Activated CD8-positive, alpha-beta T cell treated with anti-CD3 and anti-CD28 coated beads, Interleukin-2, amount 10 ng/mL, durations not matched to agents 7 days and 5 days (primary cell): ENCODE measurements at regions of chr2 and their contacts with region 1.

Region 1: GRCh38 chr2:43169987-43170386 is 56.4 kb downstream of the ZFP36L2 start:
- DNase-seq: peak; percentile 74
- ATAC-seq: peak; percentile 24
- H3K4me3 Mint-ChIP-seq: peak overlapping the region; percentile 61
- H3K27ac Mint-ChIP-seq: peak overlapping the region; percentile 89
- H3K4me1 Mint-ChIP-seq: peaks cover 83% of the 10 kb centered on the region
- H3K27me3 Mint-ChIP-seq: no peaks in the 10 kb centered on the region

Region 2: GRCh38 chr2:43100883-43101662 is 68.9 kb before region 1 on chr2:
- CTCF ChIA-PET with region 1: no interaction called
- POLR2A ChIA-PET with region 1: no interaction called
- DNase-seq: no peak
- ATAC-seq: no peak
- H3K4me3 Mint-ChIP-seq: no peak overlapping the region
- H3K27ac Mint-ChIP-seq: no peak overlapping the region
- H3K4me1 Mint-ChIP-seq: peaks cover 3% of the 10 kb centered on the region
- H3K27me3 Mint-ChIP-seq: no peaks in the 10 kb centered on the region

Region 3: GRCh38 chr2:43131024-43131889 is 38.7 kb before region 1 on chr2:
- CTCF ChIA-PET with region 1: interaction called, 242 read pairs
- POLR2A ChIA-PET with region 1: interaction called, 13 read pairs
- DNase-seq: peak; percentile 94
- ATAC-seq: peak; percentile 40
- H3K4me3 Mint-ChIP-seq: peak overlapping the region; percentile 59
- H3K27ac Mint-ChIP-seq: peak overlapping the region; percentile 100
- H3K4me1 Mint-ChIP-seq: peaks cover 91% of the 10 kb centered on the region
- H3K27me3 Mint-ChIP-seq: no peaks in the 10 kb centered on the region

Region 4: DNA sequence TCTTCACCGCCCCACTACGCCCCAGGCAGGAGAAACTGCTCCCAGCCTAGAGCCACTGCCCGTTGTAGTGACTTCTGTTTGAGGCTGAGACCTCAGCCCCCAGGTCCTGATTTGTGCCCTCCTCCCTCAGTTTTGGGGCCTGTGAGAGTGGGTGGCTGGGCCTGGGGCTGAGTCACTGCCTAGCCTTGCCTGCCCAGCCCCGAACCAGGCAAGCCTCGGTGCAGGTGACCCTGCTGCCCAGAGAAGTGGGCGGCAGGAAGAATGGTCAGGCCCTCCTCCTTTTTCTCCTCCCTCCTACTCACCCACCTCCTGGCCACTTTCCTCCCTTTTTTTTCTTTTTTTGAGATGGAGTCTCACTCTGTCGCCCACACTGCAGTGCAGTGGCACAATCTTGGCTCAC is 10.2 kb before region 1 on chr2:
- CTCF ChIA-PET with region 1: interaction called, 28 read pairs
- POLR2A ChIA-PET with region 1: interaction called, 10 read pairs
- DNase-seq: no peak
- ATAC-seq: no peak
- H3K4me3 Mint-ChIP-seq: peak overlapping the region; percentile 27
- H3K27ac Mint-ChIP-seq: peak overlapping the region; percentile 95
- H3K4me1 Mint-ChIP-seq: peaks cover 70% of the 10 kb centered on the region
- H3K27me3 Mint-ChIP-seq: no peaks in the 10 kb centered on the region

Region 5: GRCh38 chr2:43201497-43201896 is 31.5 kb after region 1 on chr2:
- CTCF ChIA-PET with region 1: interaction called, 17 read pairs
- POLR2A ChIA-PET with region 1: interaction called, 6 read pairs
- DNase-seq: no peak
- ATAC-seq: no peak
- H3K4me3 Mint-ChIP-seq: no peak overlapping the region
- H3K27ac Mint-ChIP-seq: peak overlapping the region; percentile 77
- H3K4me1 Mint-ChIP-seq: peaks cover 38% of the 10 kb centered on the region
- H3K27me3 Mint-ChIP-seq: no peaks in the 10 kb centered on the region

Region 6: DNA sequence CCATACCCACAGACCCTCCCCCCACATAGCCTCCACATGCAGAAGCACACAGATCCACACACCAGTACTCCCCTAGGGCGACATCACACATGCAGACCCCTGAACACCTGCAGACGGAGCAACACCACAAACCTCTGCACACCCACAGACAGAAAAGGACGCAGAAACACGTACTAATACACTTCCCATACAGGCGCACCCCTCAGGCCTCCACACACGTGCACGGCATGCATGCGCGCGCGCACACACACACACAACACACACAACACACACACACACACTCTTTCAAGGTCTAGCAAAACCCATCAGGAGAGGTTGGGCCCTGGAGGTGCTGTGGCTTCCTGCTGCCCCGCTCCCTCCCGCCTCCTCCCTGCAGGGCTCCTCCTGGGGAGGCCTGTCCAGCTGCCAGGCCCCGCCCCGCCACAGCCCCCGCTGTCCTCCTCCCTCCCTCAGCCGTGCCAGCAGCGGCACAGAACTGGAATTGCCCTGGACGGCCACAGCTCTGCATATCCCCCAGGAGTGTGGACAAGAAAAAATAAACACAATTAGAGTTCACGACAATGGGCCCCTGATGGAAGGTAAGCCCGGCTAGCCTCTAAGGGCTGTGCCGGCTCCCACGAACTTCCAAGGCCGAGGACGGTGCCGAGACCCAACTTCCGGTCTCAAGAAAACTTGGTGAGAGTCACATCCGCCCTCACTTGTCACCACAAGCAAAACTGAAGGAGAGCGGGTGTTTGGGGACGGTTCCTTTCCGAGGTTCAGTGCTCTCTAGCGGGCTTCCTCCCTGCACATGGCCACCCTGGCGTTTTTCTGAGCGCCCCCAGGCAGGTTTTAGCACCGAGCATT is 49.6 kb after region 1 on chr2:
- CTCF ChIA-PET with region 1: interaction called, 103 read pairs
- POLR2A ChIA-PET with region 1: interaction called, 248 read pairs
- DNase-seq: peak; percentile 93
- ATAC-seq: peak; percentile 52
- H3K4me3 Mint-ChIP-seq: peak overlapping the region; percentile 93
- H3K27ac Mint-ChIP-seq: peak overlapping the region; percentile 97
- H3K4me1 Mint-ChIP-seq: peaks cover 49% of the 10 kb centered on the region
- H3K27me3 Mint-ChIP-seq: no peaks in the 10 kb centered on the region

Region 7: DNA sequence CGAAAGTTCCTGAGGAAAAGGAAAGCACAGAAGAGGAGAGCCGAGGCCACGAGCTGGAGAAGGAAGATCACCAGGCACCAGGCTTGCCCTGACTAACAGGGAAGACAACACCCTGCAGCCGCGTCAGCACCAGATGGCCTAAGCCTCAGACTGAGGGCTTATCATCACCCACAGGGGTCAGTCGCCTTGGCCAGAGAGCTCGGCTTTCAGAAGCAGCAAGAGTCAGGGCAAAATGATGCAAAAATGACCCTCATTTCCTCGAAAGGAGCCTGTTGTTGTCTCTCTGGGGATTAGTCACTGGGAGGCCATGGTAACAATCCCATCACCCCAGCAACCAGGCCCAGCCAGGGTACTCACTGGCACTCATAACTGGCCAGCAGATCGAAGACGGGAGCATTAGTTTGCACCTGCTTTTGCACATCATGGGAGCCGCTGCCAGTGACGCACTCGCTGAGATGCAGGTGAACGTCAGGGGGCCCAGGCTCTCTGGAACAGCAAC is 99.1 kb after region 1 on chr2:
- CTCF ChIA-PET with region 1: no interaction called
- POLR2A ChIA-PET with region 1: no interaction called
- DNase-seq: no peak
- ATAC-seq: no peak
- H3K4me3 Mint-ChIP-seq: no peak overlapping the region
- H3K27ac Mint-ChIP-seq: no peak overlapping the region
- H3K4me1 Mint-ChIP-seq: peaks cover 2% of the 10 kb centered on the region
- H3K27me3 Mint-ChIP-seq: no peaks in the 10 kb centered on the region

Region 8: GRCh38 chr2:43324259-43325106 is 154.5 kb after region 1 on chr2:
- CTCF ChIA-PET with region 1: no interaction called
- POLR2A ChIA-PET with region 1: no interaction called
- DNase-seq: no peak
- ATAC-seq: no peak
- H3K4me3 Mint-ChIP-seq: no peak overlapping the region
- H3K27ac Mint-ChIP-seq: no peak overlapping the region
- H3K4me1 Mint-ChIP-seq: no peaks in the 10 kb centered on the region
- H3K27me3 Mint-ChIP-seq: no peaks in the 10 kb centered on the region